Posterior vena cava (tissue), 2 donors: ENCODE measurements at regions of chr4 and their contacts with region 1.

Region 1: GRCh38 chr4:21716526-21716925 is 232.0 kb downstream of the KCNIP4 start:
- DNase-seq: no peak

Region 2: DNA sequence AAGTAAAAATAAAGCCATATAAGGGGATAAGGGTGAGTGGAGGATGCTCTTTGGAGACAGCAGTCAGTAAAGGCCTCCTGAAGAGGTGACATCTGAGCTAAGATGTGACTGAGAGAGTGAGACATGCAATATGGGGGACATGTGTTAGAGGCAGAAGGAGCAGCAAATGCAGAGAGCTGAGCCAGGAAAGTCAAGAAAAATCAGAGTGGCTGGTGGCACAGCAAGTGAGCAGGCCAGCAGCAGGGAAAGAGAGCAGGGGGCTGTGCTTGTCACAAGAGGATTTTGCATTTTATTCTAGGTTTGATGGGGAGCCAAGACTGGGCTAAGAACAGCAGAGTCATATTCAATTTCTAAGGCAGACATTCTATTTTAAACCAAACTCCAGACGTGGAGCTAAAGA is 162.5 kb before region 1 on chr4:
- intact Hi-C with region 1: loop called in 1 of 2 experiments (anchors 2 kb)
- DNase-seq: no peak